Breast epithelium (tissue), 4 donors: ENCODE measurements at regions of chr5 and their contacts with region 1.

Region 1: DNA sequence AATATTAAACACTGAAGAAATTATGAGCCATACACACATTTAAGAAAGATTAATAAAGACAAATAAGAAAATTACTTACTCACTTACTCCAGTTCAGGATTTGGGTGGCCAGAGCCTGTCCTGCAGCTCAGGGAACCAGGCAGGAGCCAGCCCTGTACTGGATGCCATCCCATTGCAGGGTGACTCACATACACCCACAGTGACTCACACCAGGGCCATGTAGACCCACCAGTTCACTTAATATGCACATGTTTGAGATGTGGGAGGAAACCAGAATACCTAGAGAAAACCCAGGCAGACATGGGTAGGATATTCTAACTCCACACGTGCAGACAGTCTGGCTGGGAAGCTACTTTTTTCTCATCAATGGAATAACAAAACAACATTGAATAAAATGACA is 49.6 kb upstream of the ADRB2 start:
- DNase-seq: peak in 1 of 2 donors; percentile 20
- H3K4me3 ChIP-seq: no peak overlapping the region
- H3K27ac ChIP-seq: no peak overlapping the region
- H3K4me1 ChIP-seq: no peaks in the 10 kb centered on the region
- H3K27me3 ChIP-seq: no peaks in the 10 kb centered on the region
- CTCF ChIP-seq: no peak
- POLR2A ChIP-seq: no peak

Region 2: GRCh38 chr5:147530530-147531389 is 1246.0 kb before region 1 on chr5:
- intact Hi-C with region 1: loop called (anchors 10 kb)
- DNase-seq: no peak
- H3K4me3 ChIP-seq: no peak overlapping the region
- H3K27ac ChIP-seq: no peak overlapping the region
- H3K4me1 ChIP-seq: no peaks in the 10 kb centered on the region
- H3K27me3 ChIP-seq: no peaks in the 10 kb centered on the region
- CTCF ChIP-seq: no peak
- POLR2A ChIP-seq: no peak

Region 3: DNA sequence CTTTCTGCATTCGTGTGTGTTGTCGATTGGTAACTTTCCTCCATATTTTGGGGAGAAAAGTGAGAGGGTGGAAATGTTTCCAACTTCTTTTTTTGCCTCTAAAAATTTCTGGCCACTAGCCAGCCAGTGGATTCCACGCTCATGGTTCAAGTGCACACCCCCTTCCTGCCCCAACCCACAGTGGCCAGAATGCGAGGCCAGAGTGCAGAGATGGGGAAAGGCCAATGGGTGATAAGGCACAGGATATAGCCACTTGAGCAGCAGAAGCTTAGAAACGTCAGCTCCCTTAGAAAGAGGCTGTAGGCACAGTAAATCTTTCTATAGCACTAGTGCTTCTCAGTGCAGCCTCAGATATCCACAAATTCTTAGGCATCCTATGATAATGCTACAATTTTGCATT is 26.2 kb before region 1 on chr5:
- intact Hi-C with region 1: no loop called
- DNase-seq: no peak
- H3K4me3 ChIP-seq: no peak overlapping the region
- H3K27ac ChIP-seq: no peak overlapping the region
- H3K4me1 ChIP-seq: no peaks in the 10 kb centered on the region
- H3K27me3 ChIP-seq: no peaks in the 10 kb centered on the region
- CTCF ChIP-seq: no peak
- POLR2A ChIP-seq: no peak